HEK293T (cell line): ENCODE measurements at regions of chr10 and their contacts with region 1.

Region 1: DNA sequence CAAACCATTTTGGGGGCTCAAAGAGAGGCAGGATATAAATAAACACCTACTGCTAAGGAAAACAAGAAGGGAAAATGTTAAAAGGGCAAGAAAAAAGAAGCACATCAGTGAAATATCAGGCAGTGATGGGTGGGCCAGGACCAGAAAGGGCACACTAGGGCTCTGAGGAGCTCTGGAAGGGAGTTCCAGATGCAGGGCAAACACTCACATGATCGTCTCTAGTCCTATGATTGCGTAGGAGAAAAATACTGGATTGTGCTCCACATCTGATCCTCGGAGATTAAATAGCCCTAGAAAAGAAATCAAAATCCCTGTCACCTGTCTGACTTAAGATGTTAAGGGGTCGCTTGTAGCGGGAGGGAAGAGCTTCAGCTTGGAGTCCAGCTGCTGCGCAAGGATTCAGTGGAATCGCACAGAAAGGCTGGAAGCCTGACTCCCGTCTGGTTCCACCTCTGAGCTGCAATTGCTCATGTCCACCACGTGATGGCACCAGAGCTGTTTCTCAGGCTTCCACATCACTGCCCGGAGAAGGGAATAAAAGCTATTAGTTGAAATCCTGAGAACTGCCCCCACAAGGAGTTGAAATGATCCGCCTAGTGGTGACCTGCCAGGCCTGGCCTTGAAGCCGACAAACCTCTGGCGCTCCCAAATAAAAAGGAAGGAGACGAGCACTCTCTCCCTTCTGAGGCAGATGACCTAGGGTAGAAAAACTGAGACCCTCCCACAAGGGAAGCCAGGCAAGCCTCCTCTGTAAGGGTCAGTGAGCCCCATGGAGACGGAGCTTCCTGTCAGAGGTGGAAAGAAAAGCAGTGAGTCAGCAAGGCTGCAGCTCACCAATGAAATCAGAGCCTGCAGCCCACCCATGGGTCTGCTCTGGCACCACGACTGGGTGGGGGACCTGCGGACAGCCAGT is 39.2 kb downstream of the XPNPEP1 start:
- DNase-seq: peak; percentile 95

Region 2: DNA sequence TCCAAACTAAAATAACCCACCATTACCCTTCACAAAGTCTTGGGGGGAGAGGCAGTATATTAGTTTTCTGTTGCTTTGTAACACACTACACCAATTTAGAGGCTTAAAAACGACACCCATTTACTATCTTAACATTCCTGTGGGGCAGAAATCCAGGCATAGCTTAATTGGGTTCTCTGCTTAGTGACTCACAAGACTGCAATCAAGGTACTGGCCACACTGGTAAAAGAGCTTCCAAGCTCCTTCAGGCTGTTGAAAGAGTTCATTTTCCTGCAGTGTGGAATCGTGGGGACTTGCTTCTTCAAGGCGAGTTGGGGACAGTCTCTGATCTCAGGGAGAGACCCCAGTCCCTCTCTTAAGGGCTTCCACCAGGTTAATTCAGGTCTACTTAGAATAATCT is 99.9 kb before region 1 on chr10:
- CTCF ChIA-PET with region 1: no interaction called
- POLR2A ChIA-PET with region 1: no interaction called
- DNase-seq: no peak

Region 3: DNA sequence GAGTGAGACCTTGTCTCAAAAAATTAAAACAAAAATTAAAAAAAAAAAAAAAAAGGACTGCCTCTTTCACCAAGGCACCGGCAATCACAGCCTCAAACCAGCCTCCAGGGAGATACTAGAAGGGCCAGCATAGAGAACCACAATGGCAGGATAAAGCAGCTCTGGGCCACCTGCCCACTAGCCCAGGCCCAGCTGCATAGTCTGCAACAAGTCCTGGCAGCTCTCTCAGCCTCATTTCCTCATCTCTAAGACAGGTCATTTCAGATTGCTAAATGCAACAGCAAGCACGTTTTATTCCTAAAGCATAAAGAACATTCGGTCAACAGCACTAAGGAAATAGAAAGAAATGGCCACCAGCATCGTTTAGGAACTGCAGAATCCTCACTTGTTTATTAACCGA is 10.4 kb after region 1 on chr10:
- CTCF ChIA-PET with region 1: interaction called, 18 read pairs
- POLR2A ChIA-PET with region 1: no interaction called
- DNase-seq: no peak

Region 4: DNA sequence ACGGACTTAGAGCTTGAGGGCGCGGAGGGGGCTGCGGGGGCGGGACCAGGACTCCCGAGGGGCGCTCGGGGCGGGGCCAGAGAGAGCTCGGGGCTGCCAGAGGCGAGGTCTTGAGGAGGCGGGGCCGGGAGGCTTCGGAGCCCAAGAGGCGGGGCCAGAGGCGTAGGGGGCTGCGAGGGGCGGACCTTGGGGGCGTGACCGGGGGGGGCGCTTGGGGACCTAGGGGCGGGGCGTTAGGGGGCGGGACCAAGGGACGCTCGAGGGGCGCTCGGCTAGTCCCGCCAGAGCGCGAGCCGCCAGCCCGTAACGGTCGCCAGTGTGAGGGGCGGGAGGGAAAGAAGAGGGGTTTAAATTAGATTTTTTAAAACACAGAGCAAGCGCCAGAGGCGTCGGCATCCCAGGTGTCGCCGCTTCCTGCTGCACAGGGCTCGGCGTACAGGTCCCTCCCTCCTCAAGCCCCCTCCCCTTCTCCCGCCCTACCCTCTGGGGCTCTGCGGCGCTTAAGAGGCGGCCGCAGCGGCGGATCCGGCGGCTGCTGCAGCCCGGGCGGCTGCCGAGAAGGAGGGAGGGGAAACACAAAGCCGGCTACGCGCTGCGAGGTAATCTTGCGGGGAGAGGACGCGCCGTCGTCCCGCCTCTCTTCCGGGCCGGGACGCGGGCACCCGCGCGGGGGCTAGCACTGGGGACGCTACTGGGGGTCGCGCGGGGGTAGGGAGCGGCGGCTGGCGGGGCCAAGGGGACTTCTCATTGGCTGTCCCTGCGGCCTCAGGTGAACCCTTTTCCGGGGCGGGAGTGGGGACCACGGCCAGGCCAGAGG is 123.8 kb after region 1 on chr10 and contains the start of gene ADD3:
- CTCF ChIA-PET with region 1: interaction called, 3 read pairs
- POLR2A ChIA-PET with region 1: interaction called, 12 read pairs
- DNase-seq: peak; percentile 99

Region 5: DNA sequence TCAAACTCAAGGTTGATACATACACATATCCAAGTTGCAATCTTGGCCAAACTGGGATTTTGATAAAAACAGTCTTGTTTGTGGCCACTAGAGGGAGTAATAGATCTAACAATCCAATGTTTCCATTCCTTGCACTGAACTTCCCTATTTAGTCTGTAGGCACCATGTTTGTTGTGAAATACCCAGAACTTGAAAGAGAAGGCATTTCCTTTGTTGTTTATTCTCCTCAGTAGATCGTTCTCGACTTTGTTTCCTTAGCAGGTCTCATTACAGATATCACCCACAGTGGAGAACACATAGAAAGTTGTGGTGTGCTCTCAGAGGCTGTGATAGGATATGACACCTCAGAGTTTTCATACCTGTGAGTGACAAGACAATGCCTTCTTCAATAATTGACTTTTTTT is 253.0 kb after region 1 on chr10:
- CTCF ChIA-PET with region 1: interaction called, 13 read pairs
- POLR2A ChIA-PET with region 1: no interaction called
- DNase-seq: peak; percentile 71